ENCODE measurements at regions of chr9 and their contacts with region 1.

Region 1: GRCh38 chr9:114505187-114506081 is at the start of gene WHRN:
- DNase-seq: peak; percentile 94 to 95
- H3K4me3 ChIP-seq: peak within 1 kb of the TSS; percentile 45
- H3K4me3 Mint-ChIP-seq: peak within 1 kb of the TSS; percentile 88
- H3K27ac Mint-ChIP-seq: peak within 1 kb of the TSS; percentile 95
- H3K4me1 ChIP-seq: peaks cover 4% of the 10 kb centered on the region; the same call in 1 of the 2 replicates
- H3K4me1 Mint-ChIP-seq: peaks cover 12% of the 10 kb centered on the region
- H3K27me3 ChIP-seq: peaks cover 1% of the 10 kb centered on the region; the same call in 1 of the 2 replicates
- H3K27me3 Mint-ChIP-seq: peaks cover 24% of the 10 kb centered on the region
- CTCF ChIP-seq: no peak
- total RNA-seq, gene WHRN: 1.4 and 1.6 TPM in 2 replicates

Region 2: DNA sequence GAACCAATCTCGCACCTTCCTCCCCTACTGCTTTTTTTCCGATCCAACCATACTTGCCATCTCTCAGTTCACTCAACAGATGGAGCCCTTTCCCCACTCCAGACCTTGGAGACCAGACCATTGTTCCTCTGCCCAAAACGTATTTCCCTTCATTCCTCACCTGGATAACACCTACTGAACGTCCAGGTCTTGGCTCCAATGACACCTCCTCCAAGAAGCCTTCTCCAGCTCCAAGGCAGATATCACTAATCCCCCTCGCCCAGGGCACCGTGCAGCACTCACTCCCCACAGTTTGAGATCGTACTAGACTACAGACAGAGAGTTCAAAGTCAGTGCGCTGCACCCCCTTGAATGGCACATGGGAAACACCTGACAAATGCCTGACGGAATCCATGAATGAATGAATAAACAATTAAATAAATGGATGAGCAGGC is 70.5 kb before region 1 on chr9:
- CTCF ChIA-PET with region 1: interaction called, 3 read pairs
- POLR2A ChIA-PET with region 1: no interaction called
- intact Hi-C with region 1: loop called (anchors 1 kb)
- DNase-seq: peak; percentile 41 to 64
- H3K4me3 ChIP-seq: no peak overlapping the region
- H3K4me3 Mint-ChIP-seq: no peak overlapping the region
- H3K27ac Mint-ChIP-seq: no peak overlapping the region
- H3K4me1 ChIP-seq: no peaks in the 10 kb centered on the region
- H3K4me1 Mint-ChIP-seq: no peaks in the 10 kb centered on the region
- H3K27me3 ChIP-seq: no peaks in the 10 kb centered on the region
- H3K27me3 Mint-ChIP-seq: peaks cover 6% of the 10 kb centered on the region
- CTCF ChIP-seq: peak; percentile 68 to 70

Region 3: GRCh38 chr9:114487607-114488300 is 17.7 kb before region 1 on chr9:
- CTCF ChIA-PET with region 1: interaction called, 3 read pairs
- POLR2A ChIA-PET with region 1: no interaction called
- intact Hi-C with region 1: loop called (anchors 1 kb)
- DNase-seq: peak; percentile 74 to 84
- H3K4me3 ChIP-seq: no peak overlapping the region
- H3K4me3 Mint-ChIP-seq: no peak overlapping the region
- H3K27ac Mint-ChIP-seq: no peak overlapping the region
- H3K4me1 ChIP-seq: no peaks in the 10 kb centered on the region
- H3K4me1 Mint-ChIP-seq: no peaks in the 10 kb centered on the region
- H3K27me3 ChIP-seq: no peaks in the 10 kb centered on the region
- H3K27me3 Mint-ChIP-seq: no peaks in the 10 kb centered on the region
- CTCF ChIP-seq: peak; percentile 79 to 86

Measured in Caco-2 (cell line).